ENCODE measurements at regions of chr1 and their contacts with region 1.

Region 1: GRCh38 chr1:17606826-17607440 is 67.4 kb downstream of the ARHGEF10L start:
- DNase-seq: peak; percentile 91

Region 2: GRCh38 chr1:17502326-17502778 is 104.6 kb before region 1 on chr1:
- intact Hi-C with region 1: loop called (anchors 5 kb)
- DNase-seq: peak; percentile 95

Measured in posterior vena cava (tissue), 2 donors.